SK-N-SH (cell line): ENCODE measurements at regions of chr11 and their contacts with region 1.

Region 1: GRCh38 chr11:46529095-46529905 is 64.5 kb downstream of the AMBRA1 start:
- DNase-seq: peak; percentile 83
- H3K4me3 ChIP-seq: peak overlapping the region in 1 of 2 experiments; percentile 23; a peak in 1 of 4 replicates
- H3K27ac ChIP-seq: no peak overlapping the region
- H3K4me1 ChIP-seq: no peaks in the 10 kb centered on the region; a peak in 1 of 4 replicates
- H3K27me3 ChIP-seq: no peaks in the 10 kb centered on the region
- CTCF ChIP-seq: peak; percentile 94
- EP300 ChIP-seq: no peak
- RAD21 ChIP-seq: peak; percentile 75

Region 2: GRCh38 chr11:45646275-45646970 is 882.9 kb before region 1 on chr11:
- CTCF ChIA-PET with region 1: no interaction called
- POLR2A ChIA-PET with region 1: no interaction called
- DNase-seq: peak; percentile 51
- H3K4me3 ChIP-seq: no peak overlapping the region
- H3K27ac ChIP-seq: no peak overlapping the region
- H3K4me1 ChIP-seq: no peaks in the 10 kb centered on the region
- H3K27me3 ChIP-seq: no peaks in the 10 kb centered on the region; the same call in 1 of the 2 replicates
- CTCF ChIP-seq: no peak
- EP300 ChIP-seq: no peak
- RAD21 ChIP-seq: no peak

Region 3: DNA sequence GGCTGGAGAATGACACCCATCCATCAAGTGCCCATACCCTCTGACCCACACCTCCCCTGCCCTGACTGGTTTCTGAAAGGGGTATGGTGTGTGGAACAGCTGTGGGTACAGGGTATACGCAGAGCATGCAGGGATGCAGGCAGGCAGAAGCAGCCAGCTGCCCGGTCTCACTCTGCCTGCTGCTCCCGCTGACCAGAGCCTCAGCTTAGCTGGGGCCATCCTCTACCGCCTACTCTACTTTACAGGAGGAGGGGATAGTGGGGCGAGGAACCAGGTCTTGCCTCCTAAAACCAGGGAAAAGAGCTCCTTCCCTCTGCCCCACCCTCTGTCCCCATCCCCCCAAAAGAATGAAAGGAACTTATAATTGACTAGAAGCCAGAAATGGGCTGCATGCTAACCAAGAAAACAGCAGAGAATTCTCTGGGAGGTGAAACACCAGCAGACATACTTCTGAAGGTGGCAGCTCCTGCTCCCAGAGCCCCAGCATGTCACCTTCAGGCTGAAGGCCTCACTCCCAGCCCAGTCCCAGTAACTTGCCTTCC is 124.8 kb before region 1 on chr11:
- CTCF ChIA-PET with region 1: interaction called, 11 read pairs
- POLR2A ChIA-PET with region 1: no interaction called
- DNase-seq: no peak
- H3K4me3 ChIP-seq: no peak overlapping the region
- H3K27ac ChIP-seq: no peak overlapping the region
- H3K4me1 ChIP-seq: peaks cover 0 to 5% of the 10 kb centered on the region in 2 experiments; a peak in 1 of 4 replicates
- H3K27me3 ChIP-seq: no peaks in the 10 kb centered on the region
- CTCF ChIP-seq: no peak
- EP300 ChIP-seq: no peak
- RAD21 ChIP-seq: no peak

Region 4: GRCh38 chr11:46489661-46490560 is 39.4 kb before region 1 on chr11:
- CTCF ChIA-PET with region 1: interaction called, 131 read pairs
- POLR2A ChIA-PET with region 1: no interaction called
- DNase-seq: peak; percentile 54
- H3K4me3 ChIP-seq: no peak overlapping the region
- H3K27ac ChIP-seq: no peak overlapping the region
- H3K4me1 ChIP-seq: peaks cover 7 to 21% of the 10 kb centered on the region in 2 experiments; a peak in 2 of 4 replicates
- H3K27me3 ChIP-seq: no peaks in the 10 kb centered on the region
- CTCF ChIP-seq: peak; percentile 72
- EP300 ChIP-seq: no peak
- RAD21 ChIP-seq: peak; percentile 74

Region 5: DNA sequence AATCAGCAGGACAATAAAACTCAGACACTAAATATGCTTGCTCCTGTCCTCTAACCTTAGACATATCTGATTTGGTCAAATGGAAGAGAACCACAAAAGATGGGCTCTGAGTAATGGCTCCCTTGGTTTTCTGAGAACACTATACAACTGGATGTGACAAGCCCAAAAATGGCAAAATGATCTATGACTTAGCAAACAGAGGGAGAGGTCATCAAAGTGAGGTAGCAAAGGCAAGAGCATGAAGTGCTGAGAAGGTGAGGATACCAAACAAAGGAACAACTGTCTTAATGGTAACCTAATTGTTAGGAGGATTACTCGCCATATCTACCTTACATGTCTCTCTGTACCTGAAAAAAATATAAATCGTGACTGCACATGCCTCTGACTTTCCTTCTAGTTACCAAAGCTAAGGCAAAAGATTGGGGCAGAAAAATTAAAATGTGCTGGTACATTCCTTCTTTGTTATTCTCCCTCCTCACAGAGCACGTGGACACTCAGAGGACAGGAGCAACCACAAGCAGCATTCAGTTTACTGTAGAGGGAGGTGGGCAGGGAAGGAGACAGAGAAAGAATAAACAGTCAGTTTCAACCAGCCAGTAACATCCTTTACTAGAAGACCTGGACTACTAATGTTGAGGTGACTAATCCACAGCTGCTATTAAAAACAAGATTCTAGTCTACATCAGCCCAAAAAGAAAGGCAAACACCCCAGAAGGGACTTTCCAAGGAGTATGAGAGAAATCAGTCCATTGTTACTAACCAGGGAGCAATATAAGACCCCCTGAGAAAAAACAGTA is 24.3 kb before region 1 on chr11:
- CTCF ChIA-PET with region 1: interaction called, 17 read pairs
- POLR2A ChIA-PET with region 1: no interaction called
- DNase-seq: no peak
- H3K4me3 ChIP-seq: no peak overlapping the region
- H3K27ac ChIP-seq: no peak overlapping the region
- H3K4me1 ChIP-seq: peaks cover 0 to 9% of the 10 kb centered on the region in 2 experiments; a peak in 1 of 4 replicates
- H3K27me3 ChIP-seq: no peaks in the 10 kb centered on the region
- CTCF ChIP-seq: no peak
- EP300 ChIP-seq: no peak
- RAD21 ChIP-seq: no peak

Region 6: GRCh38 chr11:46547579-46547978 is 18.3 kb after region 1 on chr11:
- CTCF ChIA-PET with region 1: interaction called, 36 read pairs
- POLR2A ChIA-PET with region 1: no interaction called
- DNase-seq: no peak
- H3K4me3 ChIP-seq: no peak overlapping the region
- H3K27ac ChIP-seq: no peak overlapping the region
- H3K4me1 ChIP-seq: no peaks in the 10 kb centered on the region
- H3K27me3 ChIP-seq: no peaks in the 10 kb centered on the region
- CTCF ChIP-seq: no peak
- EP300 ChIP-seq: no peak
- RAD21 ChIP-seq: no peak